ENCODE measurements at regions of chrX and their contacts with region 1.

Region 1: GRCh38 chrX:16469870-16470269 is 180.1 kb upstream of the S100G start:
- DNase-seq: no peak
- H3K4me3 ChIP-seq: no peak overlapping the region
- H3K27ac ChIP-seq: no peak overlapping the region
- H3K4me1 ChIP-seq: peaks cover 15% of the 10 kb centered on the region
- H3K27me3 ChIP-seq: no peaks in the 10 kb centered on the region
- CTCF ChIP-seq: peak; percentile 22 to 30

Region 2: GRCh38 chrX:16267431-16267830 is 202.4 kb before region 1 on chrX:
- CTCF ChIA-PET with region 1: no interaction called
- dilution Hi-C with region 1: no loop called
- in situ Hi-C with region 1: no loop called
- intact Hi-C with region 1: no loop called
- DNase-seq: no peak
- H3K4me3 ChIP-seq: no peak overlapping the region
- H3K27ac ChIP-seq: no peak overlapping the region
- H3K4me1 ChIP-seq: no peaks in the 10 kb centered on the region
- H3K27me3 ChIP-seq: peaks cover 10% of the 10 kb centered on the region
- CTCF ChIP-seq: no peak

Region 3: DNA sequence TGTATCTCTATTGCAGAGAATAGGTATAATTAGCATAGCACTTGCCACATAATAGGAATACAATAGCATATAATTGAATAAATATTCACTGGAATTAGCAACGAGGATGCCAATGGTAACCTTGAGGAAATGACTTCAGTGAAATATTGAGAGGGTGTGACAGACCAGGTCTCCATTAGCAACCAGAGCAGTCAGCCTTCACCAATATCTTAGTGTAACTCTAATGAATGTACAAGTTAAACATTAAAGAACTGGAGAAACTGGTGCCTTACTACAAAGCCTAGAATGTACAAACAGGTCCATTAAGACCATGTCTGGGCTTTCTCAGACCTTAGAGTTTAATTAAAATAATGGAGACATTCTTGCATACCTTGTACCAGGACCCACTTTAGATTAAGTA is 159.5 kb before region 1 on chrX:
- CTCF ChIA-PET with region 1: no interaction called
- dilution Hi-C with region 1: no loop called
- in situ Hi-C with region 1: no loop called
- intact Hi-C with region 1: no loop called
- DNase-seq: no peak
- H3K4me3 ChIP-seq: no peak overlapping the region
- H3K27ac ChIP-seq: no peak overlapping the region
- H3K4me1 ChIP-seq: no peaks in the 10 kb centered on the region
- H3K27me3 ChIP-seq: peaks cover 8% of the 10 kb centered on the region
- CTCF ChIP-seq: no peak

Region 4: GRCh38 chrX:16429406-16429805 is 40.5 kb before region 1 on chrX:
- CTCF ChIA-PET with region 1: interaction called, 15 read pairs
- dilution Hi-C with region 1: no loop called
- in situ Hi-C with region 1: no loop called
- intact Hi-C with region 1: no loop called
- DNase-seq: no peak
- H3K4me3 ChIP-seq: no peak overlapping the region
- H3K27ac ChIP-seq: no peak overlapping the region
- H3K4me1 ChIP-seq: no peaks in the 10 kb centered on the region
- H3K27me3 ChIP-seq: no peaks in the 10 kb centered on the region
- CTCF ChIP-seq: no peak

Measured in mammary epithelial cell (primary cell).